Right cardiac atrium (tissue), 5 donors: ENCODE measurements at regions of chr9 and their contacts with region 1.

Region 1: GRCh38 chr9:7008411-7008810 is 250.6 kb downstream of the KDM4C start:
- DNase-seq: no peak
- ATAC-seq: no peak
- H3K4me3 ChIP-seq: no peak overlapping the region
- H3K27ac ChIP-seq: no peak overlapping the region
- H3K4me1 ChIP-seq: no peaks in the 10 kb centered on the region
- H3K27me3 ChIP-seq: no peaks in the 10 kb centered on the region

Region 2: DNA sequence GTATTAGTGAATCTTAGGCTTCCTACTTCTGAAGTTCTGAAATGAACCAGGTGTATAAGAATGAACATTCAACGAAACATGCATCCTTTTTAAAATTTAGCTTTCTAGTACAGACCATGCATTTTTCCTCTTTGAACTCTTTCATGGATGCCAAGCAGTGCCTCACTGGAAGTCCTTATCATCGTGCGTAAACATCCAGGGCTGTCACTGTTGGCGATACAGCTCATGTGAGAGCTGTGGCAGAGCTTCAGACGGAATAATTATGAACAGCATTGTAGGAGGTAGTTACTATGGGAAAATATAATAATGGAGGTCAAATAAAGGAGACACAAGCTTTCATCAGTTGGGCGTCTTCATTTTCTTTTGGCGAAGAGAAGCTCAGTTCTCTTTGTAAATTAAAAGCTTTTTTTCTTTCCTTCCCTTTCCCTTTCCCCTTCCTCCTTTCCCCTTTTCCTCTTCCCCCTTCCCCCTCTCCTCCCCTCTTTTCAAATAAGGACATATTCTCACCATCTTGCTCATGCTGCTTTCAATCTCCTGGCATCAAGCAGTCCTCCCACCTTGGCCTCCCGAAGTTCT is 83.3 kb before region 1 on chr9:
- intact Hi-C with region 1: loop called in 1 of 4 experiments (anchors 10 kb)
- DNase-seq: no peak
- ATAC-seq: peak; percentile 60 to 82
- H3K4me3 ChIP-seq: no peak overlapping the region
- H3K27ac ChIP-seq: no peak overlapping the region
- H3K4me1 ChIP-seq: peaks cover 5% of the 10 kb centered on the region
- H3K27me3 ChIP-seq: no peaks in the 10 kb centered on the region

Region 3: DNA sequence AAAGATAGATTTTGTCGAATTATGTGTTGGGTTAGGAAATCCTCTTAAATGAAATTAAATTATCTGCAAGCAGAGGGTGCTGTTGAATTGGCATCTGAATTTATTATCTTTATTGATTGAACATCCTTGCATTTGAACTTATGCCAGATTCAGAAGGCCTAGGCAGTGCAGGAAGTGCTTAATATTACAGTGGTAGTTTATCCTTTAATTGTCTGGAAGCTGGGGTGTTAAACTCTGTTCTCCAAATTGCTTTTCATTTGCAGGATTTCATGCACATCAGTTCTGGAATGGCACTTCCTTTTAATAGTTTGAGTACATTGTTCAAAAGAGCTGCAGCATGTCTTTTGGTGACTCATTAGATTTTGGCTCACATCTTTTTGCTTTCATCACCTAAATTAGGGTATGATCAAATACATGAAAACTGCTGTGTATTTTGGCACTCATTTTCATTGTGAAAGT is 64.3 kb before region 1 on chr9:
- intact Hi-C with region 1: no loop called
- DNase-seq: no peak
- ATAC-seq: peak in 1 of 2 donors; percentile 35
- H3K4me3 ChIP-seq: no peak overlapping the region
- H3K27ac ChIP-seq: no peak overlapping the region
- H3K4me1 ChIP-seq: peaks cover 3% of the 10 kb centered on the region
- H3K27me3 ChIP-seq: no peaks in the 10 kb centered on the region

Region 4: GRCh38 chr9:7415836-7416235 is 407.4 kb after region 1 on chr9:
- intact Hi-C with region 1: no loop called
- DNase-seq: no peak
- ATAC-seq: no peak
- H3K4me3 ChIP-seq: no peak overlapping the region
- H3K27ac ChIP-seq: no peak overlapping the region
- H3K4me1 ChIP-seq: no peaks in the 10 kb centered on the region
- H3K27me3 ChIP-seq: no peaks in the 10 kb centered on the region